Activated CD4-positive, alpha-beta memory T cell treated with anti-CD3 and anti-CD28 coated beads for 36 hours (primary cell): ENCODE measurements at regions of chr11 and their contacts with region 1.

Region 1: GRCh38 chr11:103055221-103055890 is 36.6 kb downstream of the DCUN1D5 start:
- DNase-seq: no peak
- H3K4me3 Mint-ChIP-seq: no peak overlapping the region
- H3K27ac Mint-ChIP-seq: no peak overlapping the region
- H3K4me1 Mint-ChIP-seq: peaks cover 12% of the 10 kb centered on the region
- H3K27me3 Mint-ChIP-seq: no peaks in the 10 kb centered on the region

Region 2: DNA sequence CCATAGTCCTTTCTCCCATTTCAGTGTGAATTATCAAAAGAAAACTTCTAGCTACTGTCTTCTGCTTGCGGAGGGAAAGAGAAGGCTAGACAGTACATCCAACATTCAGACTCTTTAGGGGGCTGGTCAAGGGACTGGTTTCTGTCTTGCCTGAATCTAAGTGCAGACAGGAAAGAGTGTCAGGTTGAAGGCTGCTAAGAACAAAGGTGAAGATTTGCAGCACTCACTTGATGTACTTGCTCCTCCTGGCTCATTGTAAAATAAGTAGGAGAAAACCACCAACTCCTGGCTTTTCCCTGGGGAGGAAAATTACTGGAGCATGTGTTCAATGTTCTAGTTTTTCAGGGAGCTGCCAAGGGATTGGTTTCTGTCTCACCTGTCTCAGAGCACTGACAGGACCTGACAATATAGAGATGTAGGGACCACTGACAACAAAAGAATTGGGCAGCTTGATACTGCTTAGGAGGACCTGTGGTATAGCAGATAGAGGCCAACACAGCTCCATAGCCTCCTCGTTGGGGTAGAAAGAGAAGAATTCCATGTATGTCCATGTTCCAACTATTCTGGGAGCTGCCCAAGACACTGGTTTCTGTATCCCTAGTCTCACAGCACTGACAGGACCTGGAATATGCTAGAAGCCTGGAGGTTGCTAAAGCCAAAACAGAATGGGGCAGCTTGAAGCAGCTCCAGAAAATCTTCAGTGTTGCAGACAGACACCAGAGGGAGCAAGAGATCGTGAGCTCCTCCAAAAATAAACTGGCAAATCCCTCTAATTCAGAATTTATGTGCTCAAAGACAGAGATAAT is 140.9 kb before region 1 on chr11:
- CTCF ChIA-PET with region 1: interaction called, 6 read pairs
- POLR2A ChIA-PET with region 1: no interaction called
- intact Hi-C with region 1: loop called (anchors 1 kb)
- DNase-seq: peak; percentile 10
- H3K4me3 Mint-ChIP-seq: no peak overlapping the region
- H3K27ac Mint-ChIP-seq: no peak overlapping the region
- H3K4me1 Mint-ChIP-seq: no peaks in the 10 kb centered on the region
- H3K27me3 Mint-ChIP-seq: no peaks in the 10 kb centered on the region

Region 3: GRCh38 chr11:102974552-102975291 is 80.6 kb before region 1 on chr11:
- CTCF ChIA-PET with region 1: no interaction called
- POLR2A ChIA-PET with region 1: no interaction called
- intact Hi-C with region 1: no loop called
- DNase-seq: no peak
- H3K4me3 Mint-ChIP-seq: no peak overlapping the region
- H3K27ac Mint-ChIP-seq: no peak overlapping the region
- H3K4me1 Mint-ChIP-seq: no peaks in the 10 kb centered on the region
- H3K27me3 Mint-ChIP-seq: peaks cover 9% of the 10 kb centered on the region